ENCODE measurements at regions of chr3 and their contacts with region 1.

Region 1: DNA sequence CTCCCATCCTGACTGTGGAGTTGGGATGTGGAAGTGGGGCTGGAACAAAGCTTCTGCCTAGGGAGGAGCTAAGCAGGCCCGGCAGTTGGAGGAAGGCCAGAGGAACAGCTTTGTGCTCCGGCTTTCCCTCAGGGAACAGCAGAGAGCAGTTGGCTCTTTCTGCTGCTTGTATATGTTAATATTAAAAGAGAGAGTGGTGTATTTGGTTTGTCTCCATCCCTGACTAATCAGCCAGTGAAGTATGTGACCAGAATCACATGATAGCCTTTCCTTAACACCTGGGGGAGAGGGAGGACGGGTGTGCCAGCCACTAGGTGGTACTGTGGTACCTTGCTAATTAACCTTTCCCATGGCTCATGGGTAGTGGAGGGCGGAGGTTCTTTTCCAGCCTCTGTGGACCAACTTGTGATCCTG is 10.0 kb downstream of the EIF2B5 start:
- DNase-seq: no peak
- ATAC-seq: peak; percentile 73 to 87 (median 80)
- H3K4me3 ChIP-seq: no peak overlapping the region
- H3K27ac ChIP-seq: no peak overlapping the region
- H3K4me1 ChIP-seq: peaks cover 0 to 12% (median 0%) of the 10 kb centered on the region in 4 donors
- H3K27me3 ChIP-seq: no peaks in the 10 kb centered on the region
- CTCF ChIP-seq: peak; percentile 36 to 50 (median 48)
- POLR2A ChIP-seq: no peak

Region 2: DNA sequence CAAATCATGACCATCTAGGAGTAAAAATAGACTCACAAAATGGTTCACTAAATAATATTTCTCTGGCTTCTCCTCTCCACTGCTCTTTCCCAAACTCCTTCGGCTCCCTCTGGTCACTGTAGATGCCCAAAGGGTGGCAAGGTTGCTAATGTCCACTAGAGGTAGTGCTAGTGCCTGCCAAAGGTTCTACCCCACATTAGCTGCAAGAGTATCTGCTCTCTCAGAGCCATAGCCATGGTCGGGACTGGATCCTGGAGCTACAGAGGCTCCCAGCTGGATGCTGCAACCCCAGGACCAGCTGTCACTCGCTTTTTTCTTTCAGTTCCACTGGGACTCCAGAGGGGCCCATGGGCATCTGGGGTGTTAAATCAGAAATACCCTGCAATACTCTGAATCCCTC is 105.1 kb before region 1 on chr3:
- intact Hi-C with region 1: no loop called
- DNase-seq: peak in 1 of 3 donors; percentile 53
- ATAC-seq: peak; percentile 95 to 98 (median 96)
- H3K4me3 ChIP-seq: no peak overlapping the region
- H3K27ac ChIP-seq: no peak overlapping the region
- H3K4me1 ChIP-seq: no peaks in the 10 kb centered on the region
- H3K27me3 ChIP-seq: no peaks in the 10 kb centered on the region
- CTCF ChIP-seq: peak; percentile 48 to 68 (median 58)
- POLR2A ChIP-seq: no peak

Region 3: GRCh38 chr3:184249412-184250166 is 104.5 kb after region 1 on chr3 and contains the start of gene EEF1AKMT4:
- intact Hi-C with region 1: loop called (anchors 10 kb)
- DNase-seq: peak; percentile 95 to 97 (median 97)
- ATAC-seq: peak; percentile 96 to 98 (median 96)
- H3K4me3 ChIP-seq: peak within 1 kb of the TSS; percentile 69 to 91 (median 89)
- H3K27ac ChIP-seq: peak within 1 kb of the TSS; percentile 65 to 84 (median 73)
- H3K4me1 ChIP-seq: peaks cover 0 to 16% (median 5%) of the 10 kb centered on the region in 4 donors
- H3K27me3 ChIP-seq: no peaks in the 10 kb centered on the region
- CTCF ChIP-seq: peak; percentile 55 to 60 (median 58)
- POLR2A ChIP-seq: peak; percentile 77
- total RNA-seq, gene EEF1AKMT4: 4.9 to 19.4 (median 7.1) TPM

Region 4: GRCh38 chr3:184491867-184492615 is 346.9 kb after region 1 on chr3:
- intact Hi-C with region 1: no loop called
- DNase-seq: no peak
- ATAC-seq: peak in 2 of 4 donors; percentile 12 to 31
- H3K4me3 ChIP-seq: no peak overlapping the region
- H3K27ac ChIP-seq: no peak overlapping the region
- H3K4me1 ChIP-seq: peaks cover 0 to 14% (median 0%) of the 10 kb centered on the region in 4 donors
- H3K27me3 ChIP-seq: no peaks in the 10 kb centered on the region
- CTCF ChIP-seq: no peak
- POLR2A ChIP-seq: no peak

Measured in right lobe of liver (tissue), 6 donors.